Activated CD4-positive, alpha-beta T cell treated with anti-CD3 and anti-CD28 coated beads, Interleukin-2, amount 10 ng/mL, durations not matched to agents 7 days and 5 days (primary cell): ENCODE measurements at regions of chr2 and their contacts with region 1.

Region 1: DNA sequence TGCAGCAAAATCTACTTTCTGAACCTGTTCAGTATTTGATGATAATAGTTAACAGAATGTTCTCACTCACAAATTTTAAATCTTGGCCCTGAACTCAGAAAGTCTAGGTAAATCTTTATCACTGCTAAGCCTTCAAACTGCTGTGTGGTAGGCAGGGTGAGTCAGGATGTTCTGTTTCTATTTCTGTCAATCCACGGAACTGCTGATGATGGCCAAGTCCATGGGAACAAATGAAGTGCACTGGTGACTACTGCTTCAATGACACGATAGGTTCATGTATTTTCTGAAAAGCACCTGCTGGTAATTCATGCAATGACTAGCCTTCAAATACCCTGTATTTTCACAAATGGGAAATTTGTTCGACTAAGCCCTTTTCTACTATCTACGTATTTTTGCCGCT is 14.2 kb downstream of the NIFK start:
- DNase-seq: no peak
- H3K4me3 Mint-ChIP-seq: no peak overlapping the region
- H3K27ac Mint-ChIP-seq: peak overlapping the region; percentile 11
- H3K4me1 Mint-ChIP-seq: peaks cover 16% of the 10 kb centered on the region
- H3K27me3 Mint-ChIP-seq: no peaks in the 10 kb centered on the region

Region 2: DNA sequence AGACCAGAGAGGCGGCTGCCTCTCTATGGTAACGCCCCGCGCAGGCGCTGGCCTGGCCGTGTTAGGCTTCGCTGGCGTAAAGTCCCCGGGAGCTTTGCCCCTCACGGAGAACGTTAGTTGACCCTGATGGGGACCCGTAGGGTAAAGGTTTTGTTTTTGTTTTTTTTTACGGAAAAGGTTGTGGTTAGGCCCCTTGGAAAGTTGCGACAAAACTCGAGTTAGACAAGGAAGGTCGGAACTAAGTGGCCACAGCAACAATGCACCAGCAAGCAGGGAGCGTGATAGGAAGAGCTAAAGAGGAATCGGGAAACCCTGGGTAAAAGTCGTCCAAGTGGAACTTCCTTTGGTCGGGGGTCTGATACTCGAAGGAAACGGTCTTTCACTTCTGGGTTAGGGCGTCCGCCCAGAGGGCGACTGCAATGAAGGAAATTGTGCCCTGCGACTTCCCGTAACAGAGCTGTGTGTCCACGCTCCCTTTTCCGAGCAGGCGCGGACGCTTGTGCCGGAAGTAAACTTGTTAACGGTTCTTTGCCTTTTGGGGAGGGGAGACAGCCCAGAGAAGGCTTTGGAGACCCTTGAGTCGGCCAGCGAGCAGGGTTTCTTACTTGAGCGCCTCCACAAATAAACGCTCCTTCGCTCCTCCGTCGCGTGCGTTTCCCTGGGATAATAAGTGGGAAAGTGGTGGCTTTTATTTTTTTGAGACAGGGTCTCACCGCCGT is 72.7 kb before region 1 on chr2:
- CTCF ChIA-PET with region 1: no interaction called
- POLR2A ChIA-PET with region 1: interaction called, 10 read pairs
- DNase-seq: peak; percentile 98
- H3K4me3 Mint-ChIP-seq: peak overlapping the region; percentile 95
- H3K27ac Mint-ChIP-seq: peak overlapping the region; percentile 100
- H3K4me1 Mint-ChIP-seq: peaks cover 65% of the 10 kb centered on the region
- H3K27me3 Mint-ChIP-seq: no peaks in the 10 kb centered on the region

Region 3: DNA sequence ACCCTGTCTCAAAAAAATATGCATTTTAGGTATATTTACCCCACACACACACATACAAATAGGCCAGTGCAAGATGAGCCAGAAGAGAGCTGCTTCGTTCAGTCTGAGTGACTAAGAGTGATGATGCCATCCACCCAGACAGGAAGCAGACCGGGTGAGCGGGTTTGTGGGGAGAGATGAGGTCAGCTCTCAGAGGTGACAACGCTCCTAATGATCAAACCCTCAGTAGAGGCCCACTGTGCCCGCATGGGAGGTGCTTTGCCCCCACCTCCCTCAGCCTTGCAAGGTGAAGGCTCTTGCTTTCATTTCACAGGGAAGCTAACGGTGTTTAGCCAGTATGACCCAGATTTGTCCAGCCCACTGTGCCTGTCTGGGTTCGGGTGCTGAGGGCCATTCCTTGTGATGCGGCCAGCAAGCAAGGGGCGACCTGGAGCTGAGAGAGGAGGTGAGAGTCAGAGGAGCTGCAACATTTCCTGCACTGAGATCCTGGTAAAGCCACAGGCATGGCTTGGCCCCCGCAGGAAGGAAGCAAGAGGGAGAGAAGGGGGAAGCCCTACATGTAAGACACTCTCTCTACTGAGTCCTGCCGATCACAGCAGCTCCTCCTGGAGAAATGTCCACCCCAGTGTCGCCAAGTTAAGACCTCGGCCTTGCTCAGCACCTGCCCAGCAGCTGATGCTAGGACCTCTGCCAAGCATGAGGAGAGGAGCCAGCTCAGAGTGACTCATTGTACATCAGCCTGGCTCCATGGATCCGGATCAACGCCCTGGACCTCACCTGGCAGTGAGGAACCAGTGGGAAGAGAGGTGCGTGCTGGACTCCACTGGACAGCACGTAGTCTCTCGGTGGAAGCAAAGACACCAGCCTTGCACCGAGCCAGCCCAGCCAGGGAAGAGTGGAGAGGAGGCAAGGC is 22.8 kb before region 1 on chr2:
- CTCF ChIA-PET with region 1: interaction called, 16 read pairs
- POLR2A ChIA-PET with region 1: no interaction called
- DNase-seq: peak; percentile 88
- H3K4me3 Mint-ChIP-seq: peak overlapping the region; percentile 70
- H3K27ac Mint-ChIP-seq: peak overlapping the region; percentile 93
- H3K4me1 Mint-ChIP-seq: peaks cover 48% of the 10 kb centered on the region
- H3K27me3 Mint-ChIP-seq: no peaks in the 10 kb centered on the region